ENCODE measurements at regions of chr9 and their contacts with region 1.

Region 1: DNA sequence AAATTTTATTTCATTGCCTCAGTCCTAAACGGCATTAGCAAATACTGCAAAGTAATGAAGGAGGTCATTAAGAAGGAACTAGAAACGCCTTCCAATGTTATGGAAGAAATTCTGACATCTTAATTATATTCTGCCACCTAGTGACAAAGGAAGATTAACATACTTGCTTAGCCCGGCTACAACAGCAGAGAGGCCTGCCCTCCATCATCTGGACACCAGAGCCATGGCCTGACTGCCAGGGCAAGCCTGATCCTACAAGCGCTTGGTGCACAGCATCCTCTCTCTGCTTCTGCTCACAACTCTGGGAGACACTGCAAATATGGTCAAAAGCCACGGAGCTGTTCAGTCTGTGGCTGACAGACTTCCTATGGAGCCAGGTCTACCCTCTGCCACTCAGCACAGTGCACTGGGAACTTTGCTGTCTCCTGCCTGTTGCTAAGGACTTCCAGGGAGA is 87.3 kb upstream of the SLC44A1 start:
- DNase-seq: no peak
- H3K4me3 Mint-ChIP-seq: no peak overlapping the region
- H3K27ac Mint-ChIP-seq: no peak overlapping the region
- H3K4me1 Mint-ChIP-seq: no peaks in the 10 kb centered on the region
- H3K27me3 Mint-ChIP-seq: peaks cover 2% of the 10 kb centered on the region

Region 2: GRCh38 chr9:104780799-104781395 is 376.3 kb before region 1 on chr9:
- intact Hi-C with region 1: loop called (anchors 10 kb)
- DNase-seq: no peak
- H3K4me3 Mint-ChIP-seq: no peak overlapping the region
- H3K27ac Mint-ChIP-seq: no peak overlapping the region
- H3K4me1 Mint-ChIP-seq: no peaks in the 10 kb centered on the region
- H3K27me3 Mint-ChIP-seq: peaks cover 11% of the 10 kb centered on the region

Region 3: DNA sequence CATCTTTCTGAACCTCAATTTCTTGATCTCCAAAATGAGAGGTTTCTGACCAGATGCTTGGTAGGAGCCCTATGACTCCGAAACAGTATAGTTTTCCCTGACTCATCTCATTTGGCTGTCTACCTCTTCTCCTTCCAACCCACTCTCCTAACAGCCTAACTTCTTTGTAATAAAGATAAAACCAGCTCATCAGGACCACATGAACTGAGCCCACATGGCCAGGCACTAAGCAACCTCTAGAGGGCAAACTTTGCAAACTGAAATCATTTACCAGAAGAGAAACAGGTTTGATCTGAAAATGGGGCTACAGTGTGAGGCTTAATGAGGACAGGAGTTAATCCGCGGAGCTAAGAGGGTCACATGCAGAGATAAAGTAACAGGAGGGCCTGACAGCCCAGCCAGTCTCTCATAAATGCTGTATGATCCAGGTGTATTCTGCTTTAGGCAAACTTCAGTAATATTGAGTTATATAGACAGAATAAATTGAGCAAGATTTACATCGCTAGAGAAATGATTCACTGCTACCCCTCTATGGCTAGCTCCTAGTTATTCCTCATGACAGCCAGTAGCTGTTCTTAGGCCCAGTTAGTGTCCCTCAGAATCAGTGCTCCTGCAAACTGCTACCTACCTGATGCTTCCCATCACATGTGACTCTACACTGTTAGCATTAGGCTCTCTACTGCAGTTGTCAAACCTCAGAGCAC is 293.8 kb before region 1 on chr9:
- intact Hi-C with region 1: loop called (anchors 1 kb)
- DNase-seq: peak; percentile 11
- H3K4me3 Mint-ChIP-seq: no peak overlapping the region
- H3K27ac Mint-ChIP-seq: no peak overlapping the region
- H3K4me1 Mint-ChIP-seq: no peaks in the 10 kb centered on the region
- H3K27me3 Mint-ChIP-seq: no peaks in the 10 kb centered on the region

Region 4: DNA sequence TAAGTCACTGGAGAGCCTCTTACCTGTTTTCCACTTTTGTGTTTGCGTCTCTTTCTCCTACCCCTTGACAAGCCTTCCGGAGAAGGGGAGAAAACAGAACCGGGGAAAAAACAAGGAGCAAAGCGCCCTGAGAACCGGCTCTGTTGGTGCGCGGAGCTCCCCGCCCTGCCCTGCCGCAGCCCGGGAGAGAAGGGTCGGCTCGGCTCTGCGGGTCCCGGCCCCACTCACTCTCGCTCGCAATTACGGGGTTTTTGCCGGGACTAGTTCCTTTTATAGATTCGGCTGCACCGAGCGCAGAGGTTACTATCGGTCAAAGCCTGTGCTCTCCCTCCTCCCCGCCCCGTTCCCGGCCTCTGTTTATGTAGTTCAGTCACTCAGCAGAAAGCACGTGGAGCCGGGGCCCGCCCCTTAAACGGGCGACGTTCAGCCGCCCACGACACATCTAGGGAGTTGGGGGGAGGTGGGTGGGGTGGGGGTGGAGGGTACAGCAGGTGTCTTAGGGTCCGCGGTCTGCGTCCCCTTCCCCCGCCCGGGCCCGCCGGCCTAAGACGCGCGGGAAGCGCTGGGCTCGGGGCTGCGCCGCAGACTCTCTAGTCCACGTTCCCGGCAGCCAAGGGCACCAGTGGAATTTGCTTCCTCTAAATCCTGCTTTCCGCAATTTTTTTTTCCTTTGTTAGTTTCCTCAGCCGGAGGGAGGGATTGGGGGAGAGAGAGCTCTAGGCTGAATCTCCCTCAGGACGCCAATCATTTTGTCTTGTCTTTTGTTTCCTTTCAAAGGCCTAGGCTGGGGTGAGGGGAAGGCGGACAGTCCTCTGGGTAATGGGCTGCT is 229.0 kb before region 1 on chr9 and contains the start of gene ABCA1:
- intact Hi-C with region 1: loop called (anchors 5 kb)
- DNase-seq: peak; percentile 38
- H3K4me3 Mint-ChIP-seq: peak within 1 kb of the TSS; percentile 72
- H3K27ac Mint-ChIP-seq: no peak within 1 kb of the TSS
- H3K4me1 Mint-ChIP-seq: peaks cover 5% of the 10 kb centered on the region
- H3K27me3 Mint-ChIP-seq: peaks cover 54% of the 10 kb centered on the region
- total RNA-seq, gene ABCA1: 0.14 TPM in 1 of 2 replicates, not detected in the other

Region 5: DNA sequence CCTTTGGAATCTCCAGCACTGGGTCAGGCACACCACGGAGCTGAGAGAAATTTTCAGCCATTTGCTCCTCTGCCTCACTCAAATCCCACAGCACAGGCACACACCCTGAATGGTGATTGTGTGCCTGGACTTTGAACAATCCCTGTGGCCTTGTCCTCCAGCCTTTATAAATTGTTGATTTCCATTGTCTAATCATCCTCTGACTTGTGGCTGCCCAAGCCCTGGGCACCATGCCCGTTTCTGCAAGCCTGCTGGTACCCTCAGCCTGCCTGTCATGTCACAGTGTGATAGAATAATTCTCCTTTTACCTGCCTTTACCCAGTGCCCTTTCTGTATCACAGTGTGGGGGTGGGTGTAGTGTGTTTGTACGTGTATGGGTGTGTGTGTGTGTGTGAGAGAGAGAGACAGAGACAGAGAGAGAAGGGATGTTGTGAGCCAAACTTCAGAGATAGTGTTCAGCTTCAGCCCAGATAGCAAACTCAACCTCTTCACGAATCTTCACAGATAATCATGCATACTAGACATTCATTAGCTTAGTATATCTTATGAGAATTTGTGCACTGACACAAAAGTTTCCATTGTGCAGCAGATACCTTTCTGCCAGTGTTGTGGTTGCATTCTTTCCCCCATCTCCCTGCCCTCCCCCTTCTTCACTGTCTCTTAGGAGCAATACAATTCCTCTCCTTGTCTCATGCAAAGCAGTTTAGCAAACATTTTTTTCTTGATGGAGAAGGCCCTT is 59.5 kb after region 1 on chr9:
- intact Hi-C with region 1: no loop called
- DNase-seq: no peak
- H3K4me3 Mint-ChIP-seq: no peak overlapping the region
- H3K27ac Mint-ChIP-seq: no peak overlapping the region
- H3K4me1 Mint-ChIP-seq: no peaks in the 10 kb centered on the region
- H3K27me3 Mint-ChIP-seq: no peaks in the 10 kb centered on the region

Region 6: GRCh38 chr9:105360344-105360743 is 203.2 kb after region 1 on chr9:
- intact Hi-C with region 1: no loop called
- DNase-seq: no peak
- H3K4me3 Mint-ChIP-seq: no peak overlapping the region
- H3K27ac Mint-ChIP-seq: no peak overlapping the region
- H3K4me1 Mint-ChIP-seq: peaks cover 25% of the 10 kb centered on the region
- H3K27me3 Mint-ChIP-seq: peaks cover 37% of the 10 kb centered on the region

Region 7: GRCh38 chr9:105414947-105415661 is 257.9 kb after region 1 on chr9:
- intact Hi-C with region 1: loop called (anchors 1 kb)
- DNase-seq: peak; percentile 29
- H3K4me3 Mint-ChIP-seq: no peak overlapping the region
- H3K27ac Mint-ChIP-seq: no peak overlapping the region
- H3K4me1 Mint-ChIP-seq: peaks cover 7% of the 10 kb centered on the region
- H3K27me3 Mint-ChIP-seq: peaks cover 43% of the 10 kb centered on the region

Measured in activated T-helper 2 cell treated with anti-CD3 and anti-CD28 coated beads, Interferon-gamma antibody, Interleukin-2, Interleukin-4, amounts not matched to agents 10 μg/mL and 5 μg/mL and 100 μg/mL, durations not matched to agents 14 hours and 24 hours and 36 hours (primary cell).